AG04450 (cell line): ENCODE measurements at regions of chr1 and their contacts with region 1.

Region 1: GRCh38 chr1:235597867-235598553 is 51.6 kb downstream of the GNG4 start:
- DNase-seq: peak; percentile 10
- H3K4me3 ChIP-seq: no peak overlapping the region
- H3K27ac ChIP-seq: no peak overlapping the region
- H3K27me3 ChIP-seq: no peaks in the 10 kb centered on the region
- CTCF ChIP-seq: peak; percentile 54

Region 2: DNA sequence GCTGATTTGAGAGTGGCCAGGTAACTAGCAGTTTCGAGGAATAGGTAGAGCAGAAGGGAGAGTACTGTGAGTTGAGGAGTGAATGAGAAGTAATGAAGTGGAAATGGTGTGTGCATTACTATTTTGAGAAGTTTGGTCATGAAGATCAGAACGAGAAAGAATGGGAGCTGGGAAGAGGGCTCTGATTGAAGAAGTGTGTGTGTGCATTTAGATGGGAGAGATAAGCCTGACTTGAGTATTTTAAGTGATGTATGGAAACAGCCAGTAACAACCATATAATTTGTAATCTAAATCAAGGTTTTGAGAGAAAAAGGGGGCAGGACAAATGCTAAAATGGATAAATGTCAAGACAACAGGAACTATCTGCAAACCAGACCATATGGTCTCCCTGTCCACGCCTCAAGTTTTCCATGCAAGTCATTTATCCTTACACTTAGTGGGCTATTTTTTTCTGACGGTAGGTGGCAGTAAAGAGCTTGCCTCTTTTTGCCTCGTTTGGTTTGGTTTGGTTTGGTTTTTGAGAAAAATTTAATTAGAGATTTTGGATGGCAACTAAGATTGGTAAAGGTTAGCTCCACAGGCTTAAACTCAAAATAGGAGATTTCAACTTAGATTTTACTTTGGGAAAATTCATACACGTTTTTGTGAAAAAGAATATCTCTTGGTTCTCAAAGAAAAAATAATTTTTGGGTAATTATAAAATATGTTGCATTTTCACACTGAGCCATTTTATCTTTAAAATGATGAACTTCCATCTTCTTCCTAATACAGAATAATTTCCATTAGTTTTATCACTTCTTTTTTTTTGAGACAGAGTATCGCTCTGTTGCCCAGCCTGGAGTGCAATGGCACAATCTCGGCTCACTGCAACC is 84.3 kb before region 1 on chr1:
- CTCF ChIA-PET with region 1: interaction called, 10 read pairs
- POLR2A ChIA-PET with region 1: no interaction called
- DNase-seq: peak; percentile 49
- H3K4me3 ChIP-seq: no peak overlapping the region
- H3K27ac ChIP-seq: no peak overlapping the region
- H3K27me3 ChIP-seq: no peaks in the 10 kb centered on the region
- CTCF ChIP-seq: peak; percentile 93

Region 3: DNA sequence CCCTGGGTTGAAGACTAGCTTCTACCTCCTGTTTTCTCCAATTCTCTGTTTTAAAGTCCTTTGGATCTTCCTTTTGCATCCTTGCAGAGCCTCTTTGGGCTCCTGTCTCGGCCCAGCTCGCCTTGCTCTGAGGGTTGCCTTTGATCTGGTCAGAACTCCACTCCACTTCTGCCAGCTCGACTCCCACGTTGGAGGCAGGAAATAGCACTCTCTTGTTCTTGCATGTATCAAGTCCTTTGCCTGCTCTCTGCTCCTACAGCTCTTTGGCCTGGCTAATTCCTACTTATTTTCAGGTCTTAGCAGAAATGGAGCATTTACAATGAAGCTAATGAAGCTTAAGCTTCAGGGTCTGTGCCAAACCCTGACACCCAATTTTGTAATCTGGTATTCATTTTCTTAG is 72.7 kb before region 1 on chr1:
- CTCF ChIA-PET with region 1: no interaction called
- POLR2A ChIA-PET with region 1: no interaction called
- DNase-seq: no peak
- H3K4me3 ChIP-seq: no peak overlapping the region
- H3K27ac ChIP-seq: no peak overlapping the region
- H3K27me3 ChIP-seq: no peaks in the 10 kb centered on the region
- CTCF ChIP-seq: no peak

Region 4: DNA sequence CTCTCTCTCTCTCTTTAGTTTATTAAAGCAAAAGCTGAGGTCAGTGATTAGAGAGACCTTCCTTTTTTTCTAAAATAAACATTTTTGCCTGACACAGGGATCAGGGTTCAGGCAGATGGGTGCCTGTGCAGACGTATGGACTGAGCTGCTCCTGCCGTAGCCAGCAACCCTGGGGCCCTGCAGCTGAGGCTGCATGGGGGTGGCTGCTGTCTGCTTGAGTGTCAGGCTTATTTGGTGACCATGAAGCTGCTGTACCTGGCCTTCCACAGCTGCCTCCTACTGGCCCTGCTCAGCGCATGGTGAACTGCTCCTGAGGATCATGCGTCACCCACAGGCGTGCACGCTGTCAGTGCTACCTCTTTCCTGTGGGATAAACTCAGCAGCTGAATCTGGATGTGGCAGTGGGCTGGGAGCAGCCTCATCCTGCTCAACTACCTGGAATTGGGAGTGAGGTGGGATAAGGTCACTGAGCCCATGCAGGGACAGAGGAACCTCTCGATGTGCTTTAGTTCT is 16.5 kb after region 1 on chr1:
- CTCF ChIA-PET with region 1: interaction called, 18 read pairs
- POLR2A ChIA-PET with region 1: no interaction called
- DNase-seq: no peak
- H3K4me3 ChIP-seq: no peak overlapping the region
- H3K27ac ChIP-seq: no peak overlapping the region
- H3K27me3 ChIP-seq: no peaks in the 10 kb centered on the region
- CTCF ChIP-seq: no peak

Region 5: DNA sequence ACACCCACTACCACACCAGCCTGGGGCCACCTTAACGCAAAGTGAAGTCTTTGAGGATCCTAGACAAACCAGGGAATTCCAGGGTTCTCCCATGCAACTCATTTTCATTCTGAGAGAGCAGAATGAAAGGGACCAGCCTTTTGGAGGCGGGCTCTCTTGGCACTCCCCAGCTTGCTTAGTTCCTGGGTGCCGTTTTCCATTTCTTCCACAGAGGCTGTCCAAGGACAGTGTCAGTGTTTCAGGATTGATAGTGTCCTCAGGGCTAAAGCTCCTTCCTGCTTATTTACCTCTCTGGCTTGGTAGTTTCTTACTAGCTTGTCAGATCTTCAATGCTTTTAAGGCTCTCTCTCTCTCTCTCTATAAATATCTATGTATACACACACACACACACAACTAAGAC is 81.6 kb after region 1 on chr1:
- CTCF ChIA-PET with region 1: no interaction called
- POLR2A ChIA-PET with region 1: no interaction called
- DNase-seq: no peak
- H3K4me3 ChIP-seq: no peak overlapping the region
- H3K27ac ChIP-seq: no peak overlapping the region
- H3K27me3 ChIP-seq: no peaks in the 10 kb centered on the region
- CTCF ChIP-seq: no peak